ENCODE measurements at regions of chr14 and their contacts with region 1.

Region 1: GRCh38 chr14:65478596-65478995 is 66.1 kb downstream of the FUT8 start:
- DNase-seq: no peak
- H3K4me3 ChIP-seq: no peak overlapping the region
- H3K27ac ChIP-seq: no peak overlapping the region
- H3K4me1 ChIP-seq: peaks cover 70% of the 10 kb centered on the region
- CTCF ChIP-seq: no peak

Region 2: DNA sequence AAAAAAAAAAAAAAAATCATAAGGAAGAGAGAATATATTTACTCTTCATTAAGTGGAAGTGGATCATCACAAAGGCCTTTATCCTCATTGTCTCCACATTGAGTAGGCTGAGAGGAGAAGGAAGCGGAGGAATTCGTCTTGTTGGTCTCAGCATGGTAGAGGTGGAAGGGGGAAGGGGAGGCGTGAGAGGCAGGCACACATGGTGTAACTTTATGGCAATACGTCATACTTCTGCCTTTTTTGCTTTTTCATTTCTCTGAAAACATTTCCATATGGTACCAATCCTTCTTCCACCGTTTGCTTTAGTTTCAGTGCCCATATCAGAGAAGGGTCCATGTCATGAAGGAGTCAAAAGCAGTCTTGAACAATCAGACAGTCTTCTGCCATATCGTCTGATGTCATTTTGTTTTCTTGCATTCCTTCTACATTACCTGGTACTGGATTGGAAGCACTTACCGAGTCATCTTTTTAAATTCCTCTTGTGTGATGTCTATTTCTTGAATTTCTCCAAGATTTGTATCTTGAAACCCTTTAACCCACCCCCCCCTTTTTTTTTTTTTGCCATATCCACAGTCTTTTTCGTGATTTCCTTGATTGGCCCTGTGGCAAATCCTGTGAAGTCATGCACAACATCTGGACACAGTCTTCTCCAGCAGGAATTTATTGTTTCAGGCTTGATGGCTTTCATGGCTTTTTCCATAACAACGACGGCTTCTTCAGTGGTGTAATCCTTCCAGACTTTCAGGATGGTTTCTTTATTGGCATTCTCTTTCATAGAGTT is 57.2 kb before region 1 on chr14:
- CTCF ChIA-PET with region 1: no interaction called
- POLR2A ChIA-PET with region 1: no interaction called
- intact Hi-C with region 1: no loop called
- DNase-seq: no peak
- H3K4me3 ChIP-seq: no peak overlapping the region
- H3K27ac ChIP-seq: no peak overlapping the region
- H3K4me1 ChIP-seq: peaks cover 20% of the 10 kb centered on the region
- CTCF ChIP-seq: no peak

Region 3: DNA sequence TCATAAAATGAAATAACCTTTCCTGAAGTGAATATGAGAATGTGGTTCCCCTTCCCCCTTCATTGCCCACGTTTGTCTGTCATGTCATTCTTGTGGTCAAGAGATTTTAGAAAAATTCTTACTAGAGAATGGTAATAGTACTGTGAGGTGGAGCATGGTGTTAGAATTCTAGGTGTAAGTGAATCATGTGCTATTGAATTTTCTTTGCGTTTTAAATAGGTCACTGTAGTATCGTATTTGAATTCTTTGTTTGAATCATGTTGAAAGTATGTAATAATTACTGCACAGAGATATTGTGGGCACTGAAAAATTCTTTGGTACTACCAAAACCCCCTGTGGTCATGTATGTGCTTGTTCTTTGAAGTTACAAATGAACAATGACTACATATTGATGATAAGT is 16.2 kb before region 1 on chr14:
- CTCF ChIA-PET with region 1: interaction called, 3 read pairs
- POLR2A ChIA-PET with region 1: interaction called, 13 read pairs
- intact Hi-C with region 1: loop called (anchors 2 kb)
- DNase-seq: no peak
- H3K4me3 ChIP-seq: no peak overlapping the region
- H3K27ac ChIP-seq: peak overlapping the region; percentile 41
- H3K4me1 ChIP-seq: peaks cover 24% of the 10 kb centered on the region
- CTCF ChIP-seq: no peak